CD4-positive, alpha-beta memory T cell (primary cell): ENCODE measurements at regions of chr11 and their contacts with region 1.

Region 1: DNA sequence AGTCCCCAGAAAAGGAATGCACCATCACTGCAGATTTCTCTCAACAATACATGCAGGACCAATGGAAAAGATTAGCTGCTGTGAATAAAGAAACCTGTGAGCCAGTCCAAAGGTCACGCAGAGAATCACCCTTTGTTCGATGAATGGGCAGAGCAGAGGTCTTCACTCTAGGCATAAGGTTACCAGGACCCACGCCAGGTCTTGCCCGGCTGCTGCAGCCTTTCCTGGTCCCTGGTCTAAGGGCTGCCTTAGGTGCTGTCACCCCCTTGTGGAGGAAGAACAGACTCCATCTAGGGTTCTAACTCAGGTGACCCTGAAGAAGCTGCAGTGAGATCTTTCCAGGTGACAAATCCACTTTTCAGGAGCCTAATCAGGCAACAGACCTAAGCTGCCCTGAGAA is 29.0 kb upstream of the NAP1L4 start:
- DNase-seq: peak; percentile 20 to 56 (median 42)
- H3K4me3 ChIP-seq: no peak overlapping the region
- H3K4me3 Mint-ChIP-seq: no peak overlapping the region
- H3K27ac ChIP-seq: no peak overlapping the region
- H3K27ac Mint-ChIP-seq: peak overlapping the region in 2 of 7 donors; percentile 41 to 42
- H3K4me1 ChIP-seq: peaks cover 25% of the 10 kb centered on the region
- H3K4me1 Mint-ChIP-seq: peaks cover 23 to 48% (median 27%) of the 10 kb centered on the region in 4 donors
- H3K27me3 ChIP-seq: no peaks in the 10 kb centered on the region
- H3K27me3 Mint-ChIP-seq: no peaks in the 10 kb centered on the region

Region 2: DNA sequence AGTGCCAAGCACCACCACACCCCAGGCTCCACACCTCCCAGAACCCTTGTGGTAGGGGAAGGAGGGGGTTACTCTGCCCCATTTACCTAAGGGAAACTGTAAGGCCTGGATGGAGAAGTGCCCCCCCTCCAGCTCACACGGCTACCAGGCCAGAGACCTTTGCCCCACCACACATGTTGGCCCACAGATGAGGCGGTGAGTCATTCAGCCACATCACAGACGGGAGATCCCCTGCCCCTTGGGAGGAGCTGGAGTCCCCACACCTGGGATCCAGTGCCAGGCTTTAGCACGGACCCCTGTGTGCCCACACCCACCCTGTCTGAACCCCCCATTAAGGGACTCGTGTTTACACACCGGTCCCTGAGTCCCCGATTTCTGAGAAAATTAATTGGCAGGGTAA is 160.5 kb before region 1 on chr11:
- CTCF ChIA-PET with region 1: no interaction called
- POLR2A ChIA-PET with region 1: no interaction called
- intact Hi-C with region 1: no loop called
- DNase-seq: no peak
- H3K4me3 ChIP-seq: no peak overlapping the region
- H3K4me3 Mint-ChIP-seq: no peak overlapping the region
- H3K27ac ChIP-seq: no peak overlapping the region
- H3K27ac Mint-ChIP-seq: no peak overlapping the region
- H3K4me1 ChIP-seq: no peaks in the 10 kb centered on the region
- H3K4me1 Mint-ChIP-seq: no peaks in the 10 kb centered on the region
- H3K27me3 ChIP-seq: peaks cover 10% of the 10 kb centered on the region
- H3K27me3 Mint-ChIP-seq: peaks cover 11 to 24% of the 10 kb centered on the region in 2 donors

Region 3: DNA sequence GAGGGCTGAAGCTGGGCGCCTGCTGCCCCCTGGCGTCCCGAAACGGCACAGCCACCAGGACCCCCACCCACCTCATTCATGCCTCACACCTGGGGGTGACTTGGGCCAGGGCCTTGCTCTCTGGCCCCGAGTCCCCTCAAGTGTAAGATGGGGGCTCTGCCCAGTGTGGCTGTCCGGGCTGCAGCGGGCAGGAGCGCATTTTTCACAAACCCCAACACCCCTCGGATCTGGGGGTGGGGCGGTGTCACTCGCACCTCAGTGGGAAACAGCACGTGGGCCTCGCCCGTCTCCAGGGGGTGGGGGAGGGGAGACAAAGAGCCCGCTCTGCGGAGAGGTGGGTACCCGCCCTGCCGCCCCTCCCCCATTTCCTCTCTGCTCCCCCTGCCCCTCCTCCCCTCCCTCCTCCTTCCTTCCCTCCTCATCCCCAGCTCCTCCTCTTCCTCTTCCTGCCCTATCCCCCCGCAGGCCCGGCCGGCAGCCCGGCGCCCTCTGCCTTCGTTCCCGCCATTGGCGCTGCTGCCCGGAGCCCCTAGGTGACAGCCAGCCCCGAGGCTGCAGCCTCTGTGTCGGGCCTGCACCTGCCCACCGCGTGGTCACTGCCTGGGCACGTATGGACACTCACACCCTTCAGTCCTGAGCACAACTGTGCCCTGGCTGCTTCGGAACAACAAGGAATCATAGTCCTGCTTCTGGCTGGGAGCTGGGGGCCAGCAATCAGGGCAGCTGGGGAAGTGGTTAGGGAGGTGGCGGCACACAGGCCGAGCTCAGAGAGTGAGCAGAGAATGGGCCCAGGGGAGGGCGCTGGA is 128.7 kb before region 1 on chr11:
- CTCF ChIA-PET with region 1: interaction called, 10 read pairs
- POLR2A ChIA-PET with region 1: no interaction called
- intact Hi-C with region 1: loop called (anchors 1 kb)
- DNase-seq: peak; percentile 50 to 66 (median 59)
- H3K4me3 ChIP-seq: peak overlapping the region in 1 of 2 donors; percentile 79
- H3K4me3 Mint-ChIP-seq: peak overlapping the region; percentile 73 to 85 (median 78)
- H3K27ac ChIP-seq: peak overlapping the region; percentile 36
- H3K27ac Mint-ChIP-seq: peak overlapping the region; percentile 82 to 93 (median 89)
- H3K4me1 ChIP-seq: peaks cover 35% of the 10 kb centered on the region
- H3K4me1 Mint-ChIP-seq: peaks cover 6 to 39% (median 24%) of the 10 kb centered on the region in 4 donors
- H3K27me3 ChIP-seq: no peaks in the 10 kb centered on the region
- H3K27me3 Mint-ChIP-seq: no peaks in the 10 kb centered on the region

Region 4: DNA sequence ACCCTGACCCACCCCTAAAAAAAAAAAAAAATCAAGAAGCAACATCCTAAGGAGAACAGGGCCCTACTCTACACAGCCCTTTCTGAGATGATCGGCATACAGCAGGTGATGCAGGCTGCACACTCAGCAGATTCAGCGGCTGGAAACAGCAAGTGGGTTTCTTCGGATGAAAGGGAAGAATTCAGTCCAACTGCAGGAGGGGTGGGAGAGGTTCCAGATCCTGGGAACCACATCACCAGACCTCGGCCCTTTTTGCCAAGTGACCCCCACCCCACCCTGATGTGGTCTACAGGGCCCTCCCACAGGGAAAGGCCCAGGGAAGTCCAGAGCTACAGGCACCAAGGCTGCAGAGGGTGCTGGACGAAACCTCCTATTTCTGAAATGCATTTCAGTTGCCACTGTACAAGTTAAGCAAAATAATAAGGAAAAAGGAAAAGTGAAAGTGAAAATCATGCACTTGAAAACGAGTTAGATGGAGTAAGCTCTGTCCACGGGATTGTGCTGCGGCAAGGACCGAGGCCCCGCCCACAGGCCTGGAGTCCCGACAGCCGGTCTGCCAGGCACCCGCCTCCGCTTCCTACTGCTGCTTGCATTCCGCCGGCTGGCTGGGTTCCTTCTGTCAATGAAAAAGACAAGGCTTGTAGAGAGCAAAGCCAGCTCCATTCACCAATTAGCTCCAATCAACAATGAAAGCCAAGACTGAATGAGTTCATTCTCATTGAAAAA is 75.9 kb before region 1 on chr11:
- CTCF ChIA-PET with region 1: interaction called, 10 read pairs
- POLR2A ChIA-PET with region 1: interaction called, 3 read pairs
- intact Hi-C with region 1: no loop called
- DNase-seq: peak in 3 of 5 donors; percentile 36 to 61 (median 45)
- H3K4me3 ChIP-seq: no peak overlapping the region
- H3K4me3 Mint-ChIP-seq: peak overlapping the region in 5 of 8 donors; percentile 21 to 76 (median 59)
- H3K27ac ChIP-seq: no peak overlapping the region
- H3K27ac Mint-ChIP-seq: peak overlapping the region; percentile 42 to 91 (median 80)
- H3K4me1 ChIP-seq: peaks cover 43% of the 10 kb centered on the region
- H3K4me1 Mint-ChIP-seq: peaks cover 36 to 68% (median 52%) of the 10 kb centered on the region in 4 donors
- H3K27me3 ChIP-seq: no peaks in the 10 kb centered on the region
- H3K27me3 Mint-ChIP-seq: no peaks in the 10 kb centered on the region

Region 5: DNA sequence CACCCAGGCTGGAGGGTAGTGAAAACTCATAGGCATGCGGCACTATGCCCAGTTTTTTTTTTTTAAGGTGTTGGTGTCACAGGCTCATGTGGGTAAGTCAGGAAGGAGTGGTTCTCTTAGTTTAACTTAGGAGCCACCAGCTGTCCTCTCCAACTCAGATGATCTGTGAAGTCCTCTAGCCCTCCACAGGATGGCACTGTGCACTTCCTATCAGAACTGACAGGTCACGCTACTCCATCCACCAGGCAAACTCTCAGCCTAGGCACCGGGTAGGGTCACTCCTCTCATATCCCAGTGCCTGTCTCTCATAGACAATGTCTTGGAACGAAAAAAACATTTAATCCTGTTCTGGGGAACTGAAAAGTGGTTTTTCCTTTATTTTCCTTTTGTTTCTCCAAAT is 45.5 kb before region 1 on chr11:
- CTCF ChIA-PET with region 1: interaction called, 49 read pairs
- POLR2A ChIA-PET with region 1: interaction called, 4 read pairs
- intact Hi-C with region 1: loop called (anchors 1 kb)
- DNase-seq: peak; percentile 47 to 63 (median 49)
- H3K4me3 ChIP-seq: no peak overlapping the region
- H3K4me3 Mint-ChIP-seq: no peak overlapping the region
- H3K27ac ChIP-seq: no peak overlapping the region
- H3K27ac Mint-ChIP-seq: peak overlapping the region in 3 of 7 donors; percentile 30 to 69 (median 51)
- H3K4me1 ChIP-seq: peaks cover 12% of the 10 kb centered on the region
- H3K4me1 Mint-ChIP-seq: peaks cover 21 to 44% (median 36%) of the 10 kb centered on the region in 4 donors
- H3K27me3 ChIP-seq: no peaks in the 10 kb centered on the region
- H3K27me3 Mint-ChIP-seq: no peaks in the 10 kb centered on the region